PC-9 (cell line): ENCODE measurements at regions of chr5 and their contacts with region 1.

Region 1: DNA sequence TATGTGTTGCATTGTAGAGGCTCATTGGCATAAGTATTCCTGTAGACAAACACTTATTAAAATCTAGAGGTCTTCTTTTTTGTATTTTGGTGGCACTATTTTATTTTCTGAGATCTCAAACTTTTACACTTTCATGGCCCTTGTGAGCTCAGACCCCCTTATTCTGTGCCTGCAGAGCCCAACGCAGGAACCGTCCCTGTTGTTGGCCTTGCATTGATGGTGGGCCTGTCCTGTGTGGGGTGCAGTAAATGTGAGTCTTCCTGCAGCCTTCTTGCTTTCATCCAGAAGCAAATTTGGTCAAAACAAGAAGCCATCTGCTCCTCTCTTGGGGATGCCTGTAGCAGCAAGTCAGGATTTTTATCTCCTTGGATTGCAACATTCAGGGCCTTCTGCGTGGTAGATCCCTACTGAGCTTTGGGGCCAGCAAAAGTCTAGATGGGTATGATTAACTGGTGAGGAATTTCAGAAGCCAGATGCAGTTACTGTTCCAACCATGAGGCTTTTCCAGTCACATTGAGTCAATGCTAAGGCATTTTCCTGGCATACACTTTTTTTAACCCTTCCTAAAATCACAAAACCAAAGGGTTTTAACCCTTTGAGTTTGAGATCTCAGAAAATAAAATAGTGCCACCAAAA is 31.7 kb downstream of the BASP1 start:
- DNase-seq: peak; percentile 59 to 84
- H3K4me3 ChIP-seq: no peak overlapping the region
- H3K27ac ChIP-seq: 0 out of 2 replicates have a peak overlapping the region, but pooled peaks have one; percentile 14
- H3K4me1 ChIP-seq: peaks cover 46% of the 10 kb centered on the region
- H3K27me3 ChIP-seq: no peaks in the 10 kb centered on the region
- CTCF ChIP-seq: no peak

Region 2: DNA sequence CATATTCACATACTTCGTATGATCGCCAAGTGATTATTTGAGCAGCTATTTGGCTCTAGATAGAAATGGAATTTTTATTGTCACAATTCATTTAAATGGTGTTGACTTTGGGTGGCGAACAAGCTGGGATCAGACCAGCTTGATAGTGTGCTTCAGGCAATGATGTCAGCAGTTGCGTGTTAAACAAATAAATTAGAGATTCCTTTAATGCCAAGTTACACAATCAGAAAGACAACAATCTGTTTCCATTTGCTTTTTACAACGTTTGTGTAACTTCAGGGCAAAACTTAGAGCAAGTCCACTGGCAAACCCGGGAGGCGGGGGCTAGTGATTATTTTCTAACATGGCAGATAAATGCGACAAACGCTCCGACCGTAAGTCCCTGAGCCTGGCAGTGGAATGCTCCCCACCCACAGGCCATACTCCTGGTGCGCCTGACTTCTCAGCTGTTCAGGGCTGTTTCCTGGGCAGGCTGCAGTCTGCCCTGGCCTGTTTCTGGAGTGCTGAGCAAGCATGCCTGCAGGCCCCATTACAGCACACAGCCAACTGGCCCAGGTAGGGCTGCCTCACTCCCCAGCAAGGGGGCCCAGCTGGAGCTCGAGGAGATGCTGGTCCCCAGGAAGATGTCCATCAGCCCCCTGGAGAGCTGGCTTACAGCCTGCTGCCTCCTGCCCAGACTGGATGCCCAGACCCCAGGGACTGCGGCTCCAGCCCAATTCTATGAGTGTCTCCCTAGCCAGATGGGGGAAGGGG is 57.0 kb after region 1 on chr5:
- CTCF ChIA-PET with region 1: no interaction called
- POLR2A ChIA-PET with region 1: no interaction called
- intact Hi-C with region 1: loop called (anchors 1 kb)
- DNase-seq: peak; percentile 46 to 77
- H3K4me3 ChIP-seq: peak overlapping the region; percentile 40; the same call in 1 of the 2 replicates
- H3K27ac ChIP-seq: peak overlapping the region; percentile 38
- H3K4me1 ChIP-seq: peaks cover 35% of the 10 kb centered on the region
- H3K27me3 ChIP-seq: no peaks in the 10 kb centered on the region
- CTCF ChIP-seq: no peak

Region 3: DNA sequence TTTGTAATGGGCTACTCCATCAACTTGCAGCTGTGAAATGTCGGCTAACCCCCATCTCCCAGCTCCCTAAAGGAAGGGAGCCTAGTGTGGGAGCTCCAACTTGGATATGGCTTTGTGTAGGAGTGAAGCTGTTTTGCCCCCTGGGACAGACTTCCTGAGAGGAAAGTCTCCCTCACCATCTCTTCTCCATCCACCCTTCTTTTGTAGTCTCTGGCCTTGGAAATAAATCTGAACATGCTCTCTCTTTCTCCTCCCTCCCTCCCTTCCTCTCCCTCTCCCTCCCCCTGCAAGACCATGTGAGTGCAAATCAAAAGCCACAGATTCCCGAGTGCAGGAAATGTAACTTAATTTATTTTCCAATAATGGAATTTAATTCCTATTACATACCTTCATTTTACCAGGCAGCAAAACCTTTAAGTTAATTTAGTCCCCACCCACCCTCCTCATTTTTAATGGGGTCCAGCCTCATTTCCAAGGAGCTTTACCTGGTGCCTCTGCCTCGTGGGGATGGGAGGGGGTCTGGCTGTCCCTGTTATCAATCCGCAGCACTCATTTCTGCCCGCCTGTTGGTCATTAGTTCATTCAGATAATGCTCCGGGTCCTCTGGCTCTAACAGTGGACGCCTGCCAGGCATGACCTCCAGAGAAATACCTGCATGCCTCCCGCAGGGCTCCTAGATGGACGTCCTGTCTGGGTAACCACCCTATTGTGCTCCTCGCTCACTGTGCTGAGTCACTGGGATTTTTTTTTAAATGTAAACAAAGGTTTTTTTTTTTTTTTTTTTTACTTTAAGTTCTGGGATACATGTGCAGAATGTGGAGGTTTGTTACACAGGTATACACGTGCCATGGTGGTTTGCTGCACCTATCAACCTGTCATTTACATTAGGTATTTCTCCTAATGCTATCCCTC is 126.1 kb after region 1 on chr5:
- CTCF ChIA-PET with region 1: no interaction called
- POLR2A ChIA-PET with region 1: no interaction called
- intact Hi-C with region 1: loop called (anchors 1 kb)
- DNase-seq: peak; percentile 74 to 83
- H3K4me3 ChIP-seq: peak overlapping the region; percentile 43; the same call in 1 of the 2 replicates
- H3K27ac ChIP-seq: no peak overlapping the region; the same call in 1 of the 2 replicates
- H3K4me1 ChIP-seq: peaks cover 30% of the 10 kb centered on the region
- H3K27me3 ChIP-seq: no peaks in the 10 kb centered on the region
- CTCF ChIP-seq: no peak